ENCODE measurements at regions of chr18 and their contacts with region 1.

Region 1: GRCh38 chr18:56638271-56639093 is at the start of gene TXNL1:
- DNase-seq: peak; percentile 96 to 100 (median 98)

Region 2: DNA sequence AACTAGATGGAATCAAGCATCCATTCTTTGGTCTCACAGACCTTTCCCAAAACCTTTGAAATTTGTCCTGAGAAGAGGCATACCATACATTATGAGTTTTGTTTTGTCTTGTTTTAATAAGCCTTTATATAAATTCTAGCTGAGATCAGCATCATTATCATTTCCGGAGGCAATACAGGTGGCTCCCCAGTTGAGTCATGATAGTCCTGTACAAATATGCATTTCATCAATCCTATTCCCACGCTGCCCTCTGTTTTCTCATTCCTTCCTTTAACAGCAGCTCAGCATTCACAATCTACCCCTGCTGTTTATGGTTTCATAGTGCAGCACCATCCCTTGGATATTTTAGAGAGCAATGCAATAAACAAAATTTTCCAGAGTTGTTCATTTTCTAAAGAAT is 216.8 kb before region 1 on chr18:
- intact Hi-C with region 1: no loop called
- DNase-seq: no peak

Region 3: GRCh38 chr18:56650944-56651770 is 12.7 kb after region 1 on chr18 and contains the start of gene WDR7:
- intact Hi-C with region 1: loop called (anchors 1 kb)
- DNase-seq: peak; percentile 91 to 99 (median 97)